Posterior vena cava (tissue), 2 donors: ENCODE measurements at regions of chr17 and their contacts with region 1.

Region 1: DNA sequence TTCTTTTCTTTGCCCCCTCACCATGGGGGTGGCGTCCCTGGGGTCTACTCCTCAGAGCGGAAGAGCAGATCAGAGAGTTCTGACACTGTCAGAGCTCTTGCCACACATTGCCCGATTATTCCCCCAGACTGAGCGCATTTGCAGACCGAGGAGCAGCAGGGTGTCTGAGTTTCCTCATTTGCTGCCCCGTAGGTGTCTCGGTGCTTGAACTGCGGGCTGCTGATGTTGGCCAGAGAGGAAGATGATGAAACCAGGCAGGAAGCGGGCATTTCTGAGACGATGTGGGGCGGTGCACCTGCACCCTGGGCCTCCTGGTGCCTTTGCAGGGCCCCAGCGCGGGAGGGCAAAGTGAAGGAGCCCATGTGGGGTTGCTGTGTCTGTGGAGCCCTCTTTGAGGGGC is 55.2 kb downstream of the ARSG start:
- DNase-seq: peak; percentile 84

Region 2: GRCh38 chr17:68205251-68205807 is 141.1 kb before region 1 on chr17:
- intact Hi-C with region 1: no loop called
- DNase-seq: peak; percentile 98

Region 3: GRCh38 chr17:68457539-68458259 is 111.3 kb after region 1 on chr17:
- intact Hi-C with region 1: no loop called
- DNase-seq: peak; percentile 100

Region 4: DNA sequence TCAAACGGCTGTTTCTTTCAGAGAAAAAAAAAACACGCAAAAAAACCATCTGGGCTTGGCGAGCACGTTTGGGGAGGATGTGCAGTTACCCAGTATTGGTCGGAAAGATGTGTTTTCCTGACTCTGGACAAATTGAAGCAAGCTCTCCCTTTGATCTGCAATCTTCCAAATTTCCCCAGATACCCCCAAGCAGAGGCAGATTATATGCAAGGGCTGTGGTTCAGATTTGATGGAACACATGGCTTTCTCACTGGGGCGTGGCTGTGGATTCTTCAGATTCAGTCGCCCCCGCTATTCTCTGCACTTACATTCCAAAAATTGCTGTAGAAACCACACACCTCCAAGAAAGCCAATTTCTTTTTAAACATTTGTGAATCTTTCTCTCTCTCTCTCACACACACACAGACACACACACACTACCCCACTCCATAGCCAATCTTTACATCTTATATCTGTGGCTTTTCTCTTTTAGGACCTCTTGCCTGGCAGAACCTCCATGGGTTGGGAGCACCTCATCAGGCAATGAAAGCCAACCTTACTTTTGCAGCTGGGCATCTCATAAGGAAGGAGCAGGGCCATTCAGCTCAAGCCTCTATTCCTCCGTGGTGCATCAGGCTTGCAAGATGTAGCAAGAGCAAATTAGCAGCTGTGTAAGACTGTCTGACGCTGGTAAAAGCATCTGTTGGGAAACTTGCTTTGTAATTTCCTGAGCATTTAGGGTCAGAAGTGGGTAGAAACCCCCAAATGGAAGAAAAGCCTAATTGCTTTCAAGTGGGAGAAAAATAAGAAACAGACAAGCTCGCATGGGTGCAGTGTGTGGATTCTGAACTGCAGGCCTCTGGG is 358.6 kb after region 1 on chr17:
- intact Hi-C with region 1: loop called in 1 of 2 experiments (anchors 5 kb)
- DNase-seq: no peak